ENCODE measurements at regions of chr1 and their contacts with region 1.

Region 1: DNA sequence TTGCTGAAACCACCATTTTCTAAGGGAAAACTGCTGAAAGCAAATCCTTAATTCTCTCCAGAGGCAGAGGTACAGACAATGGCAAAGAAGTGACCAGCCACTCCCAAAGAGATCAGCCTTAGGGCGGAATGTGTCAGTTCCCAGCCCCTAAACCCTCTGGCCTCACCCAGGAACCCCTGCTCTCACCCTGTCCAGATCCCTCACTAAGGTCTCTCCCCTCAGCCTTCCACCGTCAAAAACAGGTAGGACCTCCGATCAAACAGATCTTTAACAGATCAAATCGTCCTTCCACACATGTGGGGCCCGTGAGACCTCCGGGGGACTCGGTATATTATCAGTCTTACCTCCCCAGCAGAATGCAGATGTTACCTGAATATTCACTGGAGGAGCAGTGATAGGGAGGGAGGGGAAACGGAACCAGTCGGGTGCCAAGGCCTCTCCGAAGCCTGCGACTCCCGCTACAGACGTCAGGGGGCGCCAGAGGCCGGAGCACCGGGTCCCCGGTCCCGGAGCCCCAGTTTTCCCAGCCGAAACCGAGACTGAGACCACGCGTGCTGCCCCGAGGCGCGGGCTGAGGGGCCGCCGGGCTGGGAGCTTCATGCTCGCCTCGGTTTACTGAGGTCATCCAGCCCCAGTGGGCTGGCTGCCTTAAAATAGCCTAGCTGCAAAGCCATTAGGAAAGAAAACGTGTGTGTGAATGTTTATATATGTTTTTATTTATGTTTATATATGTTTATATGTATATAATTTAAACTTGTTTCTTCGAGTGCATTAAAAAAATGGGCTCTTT is 23.6 kb downstream of the GPA33 start:
- DNase-seq: peak; percentile 87
- ATAC-seq: peak; percentile 97
- H3K4me3 ChIP-seq: peak overlapping the region; percentile 64
- H3K27ac ChIP-seq: no peak overlapping the region
- H3K4me1 ChIP-seq: no peaks in the 10 kb centered on the region
- H3K27me3 ChIP-seq: no peaks in the 10 kb centered on the region
- CTCF ChIP-seq: peak; percentile 98

Region 2: DNA sequence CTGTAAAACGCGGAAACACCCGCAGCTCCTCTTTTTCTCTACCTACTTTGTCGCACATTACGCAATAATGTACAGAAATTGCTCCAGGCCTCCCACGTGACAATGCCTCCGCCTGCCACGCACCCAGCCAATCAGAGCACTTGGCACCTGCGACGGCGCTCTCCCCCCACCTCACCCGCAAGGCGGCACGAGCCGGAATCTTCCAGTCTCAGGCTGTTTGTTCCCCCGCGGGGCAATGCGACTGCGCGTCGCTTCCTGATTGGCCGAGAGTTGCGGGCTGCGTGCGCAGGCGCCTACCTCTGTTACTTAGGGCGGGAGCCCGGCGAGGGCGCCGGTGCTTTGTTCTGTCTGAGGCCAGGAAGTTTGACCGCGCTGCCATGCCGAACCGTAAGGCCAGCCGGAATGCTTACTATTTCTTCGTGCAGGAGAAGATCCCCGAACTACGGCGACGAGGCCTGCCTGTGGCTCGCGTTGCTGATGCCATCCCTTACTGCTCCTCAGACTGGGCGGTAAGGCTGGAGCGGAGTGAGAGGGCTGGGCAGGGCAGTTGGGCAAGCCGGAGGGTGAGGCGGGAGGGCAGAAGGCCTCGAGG is 77.5 kb before region 1 on chr1 and contains the start of gene MAEL:
- CTCF ChIA-PET with region 1: no interaction called
- POLR2A ChIA-PET with region 1: interaction called, 13 read pairs
- intact Hi-C with region 1: no loop called
- DNase-seq: no peak
- ATAC-seq: no peak
- H3K4me3 ChIP-seq: no peak within 1 kb of the TSS
- H3K27ac ChIP-seq: no peak within 1 kb of the TSS
- H3K4me1 ChIP-seq: no peaks in the 10 kb centered on the region
- H3K27me3 ChIP-seq: peaks cover 78% of the 10 kb centered on the region
- CTCF ChIP-seq: no peak
- total RNA-seq, gene MAEL: not detected in 2 replicates

Region 3: DNA sequence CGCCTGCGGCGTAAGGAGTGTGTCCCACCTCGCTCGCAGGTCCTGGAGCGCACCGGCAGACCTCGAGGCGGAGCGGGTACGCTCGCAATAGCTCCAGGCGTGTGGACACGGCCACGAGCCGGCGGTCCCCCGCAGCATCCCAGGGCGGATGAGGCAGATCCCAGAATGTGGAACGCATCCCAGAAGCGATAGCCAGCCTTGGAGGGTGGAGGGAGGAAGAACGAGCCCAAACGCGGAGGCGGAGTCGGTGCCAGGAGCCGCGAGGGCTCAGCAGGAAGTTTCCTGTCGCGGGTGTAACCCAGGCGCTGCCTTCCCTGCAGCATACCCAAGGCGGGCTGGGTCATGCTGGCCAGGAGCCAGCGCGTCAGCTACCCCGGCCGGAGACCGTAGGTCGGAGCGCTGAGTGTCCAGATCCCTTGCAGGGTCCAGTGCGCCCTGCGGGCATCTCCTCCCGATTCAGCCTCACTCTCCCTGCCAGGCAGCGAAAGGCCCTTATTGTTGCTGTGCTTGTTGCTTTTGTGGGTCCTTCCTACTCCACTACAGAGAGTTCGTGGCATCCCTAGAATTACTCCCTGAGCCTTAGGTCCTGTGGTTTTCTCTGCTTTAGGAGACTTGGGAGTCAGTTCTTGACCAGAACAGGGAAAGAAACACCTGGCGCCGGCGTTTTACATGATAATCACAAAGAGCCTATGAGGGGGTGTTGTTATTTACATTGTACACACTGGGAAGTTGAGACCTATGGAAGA is 55.0 kb after region 1 on chr1:
- CTCF ChIA-PET with region 1: interaction called, 3 read pairs
- POLR2A ChIA-PET with region 1: no interaction called
- intact Hi-C with region 1: loop called (anchors 1 kb)
- DNase-seq: peak; percentile 66
- ATAC-seq: peak; percentile 63
- H3K4me3 ChIP-seq: peak overlapping the region; percentile 68
- H3K27ac ChIP-seq: no peak overlapping the region
- H3K4me1 ChIP-seq: no peaks in the 10 kb centered on the region
- H3K27me3 ChIP-seq: no peaks in the 10 kb centered on the region
- CTCF ChIP-seq: no peak

Region 4: GRCh38 chr1:167268398-167268787 is 201.9 kb after region 1 on chr1:
- CTCF ChIA-PET with region 1: no interaction called
- POLR2A ChIA-PET with region 1: no interaction called
- intact Hi-C with region 1: loop called (anchors 5 kb)
- DNase-seq: no peak
- ATAC-seq: no peak
- H3K4me3 ChIP-seq: no peak overlapping the region
- H3K27ac ChIP-seq: no peak overlapping the region
- H3K4me1 ChIP-seq: peaks cover 14% of the 10 kb centered on the region
- H3K27me3 ChIP-seq: no peaks in the 10 kb centered on the region
- CTCF ChIP-seq: no peak

Region 5: GRCh38 chr1:167442124-167442848 is 375.8 kb after region 1 on chr1:
- CTCF ChIA-PET with region 1: interaction called, 12 read pairs
- POLR2A ChIA-PET with region 1: no interaction called
- intact Hi-C with region 1: loop called (anchors 1 kb)
- DNase-seq: peak; percentile 99
- ATAC-seq: peak; percentile 99
- H3K4me3 ChIP-seq: peak overlapping the region; percentile 25; the same call in 1 of the 2 replicates
- H3K27ac ChIP-seq: peak overlapping the region; percentile 73
- H3K4me1 ChIP-seq: peaks cover 30% of the 10 kb centered on the region
- H3K27me3 ChIP-seq: no peaks in the 10 kb centered on the region
- CTCF ChIP-seq: peak; percentile 99

Measured in PC-3 (cell line).